ENCODE measurements at regions of chr6 and their contacts with region 1.

Region 1: GRCh38 chr6:121838842-121839241 is 403.4 kb downstream of the GJA1 start:
- DNase-seq: peak; percentile 37 to 66
- ATAC-seq: peak; percentile 79 to 98 (median 92)
- H3K4me3 ChIP-seq: no peak overlapping the region
- H3K27ac ChIP-seq: peak overlapping the region in 2 of 10 donors; percentile 4 to 36
- H3K4me1 ChIP-seq: peaks cover 0 to 20% (median 4%) of the 10 kb centered on the region in 9 donors
- H3K27me3 ChIP-seq: no peaks in the 10 kb centered on the region
- CTCF ChIP-seq: no peak

Region 2: DNA sequence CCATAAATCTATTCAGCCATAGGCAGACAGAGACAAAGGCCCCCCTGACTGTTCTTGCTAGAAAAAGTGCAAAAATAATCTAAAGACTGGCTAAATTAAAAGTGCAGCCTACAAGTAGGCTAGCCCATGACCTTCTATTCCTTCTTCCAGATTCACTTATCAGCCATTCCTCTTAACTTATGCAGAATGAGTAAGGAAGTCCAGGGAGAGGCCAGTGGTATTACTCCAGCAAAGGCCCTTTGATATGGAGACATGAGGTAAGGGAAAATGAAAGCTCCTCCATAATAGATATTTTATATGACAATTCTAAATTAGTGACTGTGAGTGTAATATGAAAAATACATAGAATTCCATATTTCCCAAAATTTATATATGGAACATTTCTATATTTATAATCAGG is 703.9 kb before region 1 on chr6:
- intact Hi-C with region 1: loop called in 1 of 10 experiments (anchors 5 kb)
- DNase-seq: no peak
- ATAC-seq: no peak
- H3K4me3 ChIP-seq: no peak overlapping the region
- H3K27ac ChIP-seq: no peak overlapping the region
- H3K4me1 ChIP-seq: no peaks in the 10 kb centered on the region
- H3K27me3 ChIP-seq: no peaks in the 10 kb centered on the region
- CTCF ChIP-seq: no peak

Region 3: DNA sequence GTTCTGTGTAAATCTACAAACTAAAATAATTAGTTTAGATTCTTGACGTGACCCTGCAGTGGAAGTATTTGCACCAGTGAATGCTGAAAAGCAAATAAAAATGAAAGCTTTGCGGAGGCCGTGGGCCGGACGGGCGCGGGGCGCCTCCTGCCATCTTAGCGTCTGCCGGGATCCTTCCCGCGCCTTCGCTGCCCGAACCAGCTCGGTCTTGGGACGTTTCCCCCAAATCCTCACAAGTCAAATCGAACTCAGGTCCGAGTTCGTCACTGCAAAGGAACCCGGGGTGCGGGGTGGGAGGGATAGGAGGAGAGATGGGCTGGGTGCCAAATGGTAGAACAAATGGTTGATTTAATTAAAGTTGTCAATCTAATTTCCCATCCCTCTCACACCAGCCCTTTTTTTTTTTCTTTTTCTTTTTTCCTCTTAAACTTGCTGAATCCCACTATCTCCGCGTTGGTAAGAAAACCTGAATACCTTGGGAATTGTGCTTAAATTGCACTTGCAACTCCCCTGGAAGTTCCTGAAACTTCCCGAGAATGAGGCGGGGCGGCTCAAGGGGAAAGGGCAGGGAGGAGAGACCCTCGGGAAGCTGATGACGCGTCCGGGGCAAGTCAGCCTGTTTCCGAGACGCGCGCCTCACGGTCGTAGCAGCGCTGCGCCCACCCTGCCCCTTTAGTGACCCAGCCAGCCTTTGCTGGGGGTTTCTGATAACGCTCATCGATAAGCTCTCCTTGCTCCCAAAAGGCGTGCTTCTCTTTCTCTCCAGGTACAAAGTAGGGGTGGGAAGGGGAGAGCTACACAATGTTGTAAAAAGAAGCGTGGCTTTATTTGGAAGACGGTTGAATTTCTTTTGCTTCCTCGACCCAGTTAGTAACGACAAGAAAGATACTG is 401.6 kb before region 1 on chr6:
- intact Hi-C with region 1: loop called in 1 of 10 experiments (anchors 2 kb)
- DNase-seq: peak; percentile 50 to 53
- ATAC-seq: peak; percentile 56 to 72 (median 64)
- H3K4me3 ChIP-seq: peak overlapping the region; percentile 54 to 82 (median 72)
- H3K27ac ChIP-seq: peak overlapping the region; percentile 83 to 96 (median 90)
- H3K4me1 ChIP-seq: peaks cover 0 to 41% (median 18%) of the 10 kb centered on the region in 9 donors
- H3K27me3 ChIP-seq: peaks cover 0 to 35% (median 0%) of the 10 kb centered on the region in 7 donors
- CTCF ChIP-seq: no peak

Region 4: GRCh38 chr6:121593011-121593690 is 245.7 kb before region 1 on chr6:
- intact Hi-C with region 1: loop called in 3 of 10 experiments (anchors 5 to 10 kb)
- DNase-seq: no peak
- ATAC-seq: no peak
- H3K4me3 ChIP-seq: no peak overlapping the region
- H3K27ac ChIP-seq: no peak overlapping the region
- H3K4me1 ChIP-seq: peaks cover 0 to 12% (median 0%) of the 10 kb centered on the region in 9 donors
- H3K27me3 ChIP-seq: no peaks in the 10 kb centered on the region
- CTCF ChIP-seq: no peak

Region 5: GRCh38 chr6:121666814-121667213 is 172.0 kb before region 1 on chr6:
- intact Hi-C with region 1: loop called in 3 of 10 experiments (anchors 10 kb)
- DNase-seq: peak in 1 of 2 donors; percentile 21
- ATAC-seq: peak; percentile 77 to 98 (median 94)
- H3K4me3 ChIP-seq: no peak overlapping the region
- H3K27ac ChIP-seq: peak overlapping the region in 8 of 10 donors; percentile 41 to 77 (median 58)
- H3K4me1 ChIP-seq: peaks cover 0 to 20% (median 12%) of the 10 kb centered on the region in 9 donors
- H3K27me3 ChIP-seq: no peaks in the 10 kb centered on the region
- CTCF ChIP-seq: no peak

Measured in heart right ventricle (tissue), 16 donors.